ENCODE measurements at regions of chr20 and their contacts with region 1.

Region 1: GRCh38 chr20:32535953-32536823 is 48.9 kb downstream of the NOL4L start:
- DNase-seq: peak; percentile 92
- ATAC-seq: peak; percentile 52
- H3K4me3 Mint-ChIP-seq: peak overlapping the region; percentile 77
- H3K27ac Mint-ChIP-seq: peak overlapping the region; percentile 94
- H3K4me1 Mint-ChIP-seq: peaks cover 82% of the 10 kb centered on the region
- H3K27me3 Mint-ChIP-seq: no peaks in the 10 kb centered on the region

Region 2: DNA sequence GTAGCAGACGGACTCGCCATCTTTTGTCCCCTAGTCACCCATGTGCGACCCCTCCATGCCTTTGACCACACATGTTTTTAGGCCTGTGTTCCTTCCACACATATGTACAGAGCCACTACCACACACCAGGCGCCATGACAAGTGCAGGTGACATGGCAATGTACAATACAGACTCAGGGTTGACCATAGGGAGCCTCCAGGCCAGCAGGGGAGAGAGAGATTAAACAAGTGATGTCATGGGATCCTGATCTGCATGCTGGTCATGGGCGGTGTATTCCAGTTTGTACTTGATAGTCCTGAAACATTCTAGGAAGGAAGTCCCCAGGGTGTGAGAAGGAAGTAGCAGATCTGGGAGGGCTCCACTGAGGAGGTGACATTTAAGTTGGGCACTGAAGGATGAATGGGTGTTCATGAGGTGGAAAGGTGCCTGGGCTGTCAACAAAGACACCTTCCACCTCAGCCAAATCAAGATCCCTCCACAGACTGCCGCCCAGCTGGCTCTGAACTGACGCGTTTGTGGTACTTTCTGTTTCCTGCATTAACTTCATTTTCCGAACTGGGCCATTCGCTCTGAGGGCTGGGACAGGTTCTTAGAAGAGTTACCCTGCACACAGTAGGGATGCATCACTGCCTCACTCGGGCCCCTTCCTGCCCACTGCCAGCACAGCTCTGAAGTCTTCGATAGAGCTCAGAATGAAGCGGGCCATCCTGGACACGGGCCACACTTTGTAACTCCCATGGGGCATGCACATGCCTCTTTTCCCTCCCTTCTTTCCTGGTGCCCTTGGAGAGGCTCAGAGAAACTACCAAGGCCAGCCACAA is 45.0 kb before region 1 on chr20:
- CTCF ChIA-PET with region 1: no interaction called
- POLR2A ChIA-PET with region 1: no interaction called
- DNase-seq: no peak
- ATAC-seq: no peak
- H3K4me3 Mint-ChIP-seq: no peak overlapping the region
- H3K27ac Mint-ChIP-seq: no peak overlapping the region
- H3K4me1 Mint-ChIP-seq: peaks cover 9% of the 10 kb centered on the region
- H3K27me3 Mint-ChIP-seq: no peaks in the 10 kb centered on the region

Region 3: DNA sequence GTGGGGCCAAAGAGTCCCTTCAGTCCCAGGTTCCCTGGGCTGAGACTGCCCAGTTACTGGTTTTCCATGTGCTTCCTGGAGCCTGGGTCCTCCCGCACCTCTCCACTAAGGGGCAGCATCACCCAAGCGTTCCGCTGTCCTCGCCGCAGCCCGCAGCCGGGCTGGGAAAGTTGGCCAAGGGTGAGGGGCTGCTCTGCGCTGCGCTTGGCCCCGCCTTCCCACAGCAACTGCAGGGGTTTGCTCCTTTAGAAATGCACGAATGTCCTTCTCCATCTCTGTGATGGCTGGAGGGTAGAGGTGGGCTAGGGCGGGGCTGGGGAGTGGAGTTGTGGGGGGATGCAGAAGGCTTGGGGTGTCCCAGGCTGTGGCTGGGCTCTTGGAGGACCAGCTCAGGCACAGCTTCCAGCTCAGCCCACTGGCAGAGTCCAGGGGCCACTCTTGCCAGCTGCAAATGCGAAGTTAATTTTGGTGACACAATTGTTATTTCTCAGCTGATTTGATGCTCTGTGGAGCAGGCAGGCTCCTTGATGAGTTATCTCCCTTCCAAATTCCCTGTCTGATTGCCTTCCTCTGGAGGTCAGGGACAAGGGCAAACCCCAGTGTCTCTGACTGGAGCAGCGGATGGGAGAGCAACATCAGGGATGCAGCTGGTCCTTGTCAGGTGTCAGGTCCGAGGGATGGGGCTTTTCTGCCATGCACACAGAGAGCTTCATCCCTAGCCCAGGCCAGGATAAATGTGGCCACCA is 14.2 kb before region 1 on chr20:
- CTCF ChIA-PET with region 1: interaction called, 241 read pairs
- POLR2A ChIA-PET with region 1: interaction called, 145 read pairs
- DNase-seq: peak; percentile 71
- ATAC-seq: peak; percentile 79
- H3K4me3 Mint-ChIP-seq: no peak overlapping the region
- H3K27ac Mint-ChIP-seq: peak overlapping the region; percentile 80
- H3K4me1 Mint-ChIP-seq: peaks cover 56% of the 10 kb centered on the region
- H3K27me3 Mint-ChIP-seq: no peaks in the 10 kb centered on the region

Region 4: GRCh38 chr20:32572271-32572968 is 36.2 kb after region 1 on chr20:
- CTCF ChIA-PET with region 1: interaction called, 3 read pairs
- POLR2A ChIA-PET with region 1: interaction called, 10 read pairs
- DNase-seq: no peak
- ATAC-seq: no peak
- H3K4me3 Mint-ChIP-seq: no peak overlapping the region
- H3K27ac Mint-ChIP-seq: no peak overlapping the region
- H3K4me1 Mint-ChIP-seq: peaks cover 16% of the 10 kb centered on the region
- H3K27me3 Mint-ChIP-seq: no peaks in the 10 kb centered on the region

Region 5: DNA sequence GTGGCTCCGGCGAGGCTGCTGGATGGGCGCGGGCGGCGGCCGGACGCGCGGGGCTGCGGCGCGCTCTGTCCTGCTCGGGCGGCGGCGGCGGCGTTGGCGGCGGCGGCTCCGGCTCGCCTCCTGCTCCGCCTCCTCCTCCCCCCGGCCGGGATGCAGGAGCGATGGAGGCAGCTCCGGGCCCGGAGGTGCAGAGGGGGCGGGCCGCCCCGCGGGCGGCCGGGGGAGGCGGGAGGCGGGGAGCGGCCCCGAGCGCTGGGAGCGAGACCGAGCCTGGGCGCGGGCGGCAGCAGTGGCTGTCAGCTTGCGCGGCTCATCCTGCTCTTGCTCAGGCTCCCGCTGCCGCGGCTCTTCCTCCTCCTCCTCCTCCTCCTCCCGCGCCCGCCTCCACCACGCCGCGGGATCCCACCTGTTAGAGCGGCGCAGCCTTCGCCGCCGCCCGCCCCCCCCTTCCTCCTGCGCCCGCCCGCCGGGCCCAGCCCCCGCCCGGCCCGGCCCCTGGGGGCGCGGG is 48.9 kb after region 1 on chr20 and contains the start of gene NOL4L:
- CTCF ChIA-PET with region 1: interaction called, 7 read pairs
- POLR2A ChIA-PET with region 1: interaction called, 11 read pairs
- DNase-seq: peak; percentile 53
- ATAC-seq: peak; percentile 45
- H3K4me3 Mint-ChIP-seq: peak within 1 kb of the TSS; percentile 81
- H3K27ac Mint-ChIP-seq: peak within 1 kb of the TSS; percentile 74
- H3K4me1 Mint-ChIP-seq: peaks cover 46% of the 10 kb centered on the region
- H3K27me3 Mint-ChIP-seq: peaks cover 22% of the 10 kb centered on the region
- total RNA-seq, gene NOL4L: 22.2 to 24.5 TPM

Measured in activated CD8-positive, alpha-beta T cell treated with anti-CD3 and anti-CD28 coated beads, Interleukin-2, amount 10 ng/mL, durations not matched to agents 7 days and 5 days (primary cell).